ENCODE measurements at regions of chr3 and their contacts with region 1.

Region 1: DNA sequence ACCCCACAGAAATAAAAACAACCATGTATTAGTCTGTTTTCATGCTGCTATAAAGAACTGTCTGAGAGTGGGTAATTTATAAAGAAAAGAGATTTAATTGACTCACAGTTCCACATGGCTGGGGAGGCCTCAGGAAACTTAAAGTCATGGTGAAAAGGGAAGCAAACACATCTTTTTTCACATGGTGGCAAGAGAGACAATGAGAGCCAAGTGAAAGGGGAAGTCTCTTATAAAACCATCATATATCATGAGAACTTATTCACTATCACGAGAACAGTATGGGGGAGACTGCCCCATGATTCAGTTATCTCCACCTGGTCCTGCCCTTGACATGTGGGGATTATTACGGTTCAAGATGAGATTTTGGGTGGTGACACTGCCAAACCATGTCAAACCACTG is 141.5 kb downstream of the ZMAT3 start:
- DNase-seq: no peak
- H3K4me3 Mint-ChIP-seq: no peak overlapping the region
- H3K27ac Mint-ChIP-seq: no peak overlapping the region
- H3K4me1 Mint-ChIP-seq: no peaks in the 10 kb centered on the region
- H3K27me3 Mint-ChIP-seq: no peaks in the 10 kb centered on the region
- CTCF ChIP-seq: no peak

Region 2: DNA sequence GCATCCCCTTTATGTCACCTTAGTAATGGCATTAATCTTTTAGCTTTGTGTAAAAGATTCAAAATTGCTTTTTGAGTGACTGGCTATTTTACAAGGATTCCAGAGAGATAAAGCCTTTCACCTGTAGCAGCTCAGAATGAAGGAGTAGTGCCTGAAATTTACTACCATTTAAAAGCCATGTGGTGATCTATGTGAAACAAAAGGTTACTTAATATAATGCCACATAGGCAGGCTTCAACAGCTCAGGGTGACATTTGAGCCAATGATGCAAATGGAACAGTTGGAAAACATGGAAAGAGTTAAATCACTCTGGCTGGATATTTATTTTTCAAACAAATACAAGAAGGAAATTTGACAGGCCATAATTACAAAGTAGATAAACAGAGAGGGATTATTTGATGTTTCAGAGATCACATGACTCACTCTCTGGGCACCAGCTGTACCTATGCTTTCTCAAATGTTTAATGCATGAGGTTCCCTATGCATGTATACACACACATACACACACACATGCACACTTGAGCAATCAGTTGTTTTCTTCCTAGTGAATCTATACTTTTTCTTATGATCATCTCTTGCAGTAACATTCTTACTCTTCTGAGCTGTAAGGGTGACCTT is 30.0 kb before region 1 on chr3:
- CTCF ChIA-PET with region 1: no interaction called
- POLR2A ChIA-PET with region 1: no interaction called
- intact Hi-C with region 1: loop called (anchors 1 kb)
- DNase-seq: no peak
- H3K4me3 Mint-ChIP-seq: no peak overlapping the region
- H3K27ac Mint-ChIP-seq: no peak overlapping the region
- H3K4me1 Mint-ChIP-seq: no peaks in the 10 kb centered on the region
- H3K27me3 Mint-ChIP-seq: no peaks in the 10 kb centered on the region
- CTCF ChIP-seq: no peak